ENCODE measurements at regions of chr11 and their contacts with region 1.

Region 1: DNA sequence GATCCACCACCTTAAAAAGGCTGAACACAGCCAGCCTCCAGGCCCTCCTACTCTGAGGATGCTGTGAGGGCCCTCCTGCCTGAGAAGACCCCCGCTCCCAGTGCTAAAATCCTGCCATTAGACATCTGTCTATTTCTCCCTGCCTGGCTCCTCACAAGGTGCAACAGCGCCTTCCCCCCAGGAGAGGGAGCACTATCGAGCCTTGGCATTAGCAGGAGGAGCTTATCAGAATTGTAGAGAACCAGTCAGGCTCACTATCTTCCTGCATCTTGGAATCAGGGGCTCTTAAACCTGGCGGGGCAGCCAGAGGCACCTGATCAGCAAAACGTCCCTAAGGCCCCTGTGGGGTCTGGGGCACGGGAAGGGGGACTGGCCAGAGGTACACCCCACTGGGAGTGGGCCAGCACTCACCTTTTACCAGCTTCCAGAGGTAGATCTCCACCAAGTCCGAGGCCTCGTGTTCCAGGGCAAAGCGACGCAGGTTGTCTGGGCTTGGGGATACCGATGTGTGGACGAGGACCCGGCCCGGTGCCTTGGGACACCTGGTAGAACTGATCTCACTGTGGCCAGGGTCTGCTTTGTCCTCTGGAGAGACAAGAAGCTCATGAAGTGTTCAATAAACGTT is 28.7 kb downstream of the CHRDL2 start:
- DNase-seq: peak; percentile 85 to 89
- H3K4me3 ChIP-seq: no peak overlapping the region
- H3K4me3 Mint-ChIP-seq: no peak overlapping the region
- H3K27ac Mint-ChIP-seq: no peak overlapping the region
- H3K4me1 ChIP-seq: no peaks in the 10 kb centered on the region
- H3K4me1 Mint-ChIP-seq: no peaks in the 10 kb centered on the region
- H3K27me3 ChIP-seq: no peaks in the 10 kb centered on the region
- H3K27me3 Mint-ChIP-seq: no peaks in the 10 kb centered on the region
- CTCF ChIP-seq: peak; percentile 99 to 100

Region 2: GRCh38 chr11:74611369-74611861 is 91.1 kb before region 1 on chr11:
- CTCF ChIA-PET with region 1: no interaction called
- POLR2A ChIA-PET with region 1: no interaction called
- intact Hi-C with region 1: no loop called
- DNase-seq: peak in 1 of 2 experiments; percentile 43
- H3K4me3 ChIP-seq: no peak overlapping the region
- H3K4me3 Mint-ChIP-seq: no peak overlapping the region
- H3K27ac Mint-ChIP-seq: no peak overlapping the region
- H3K4me1 ChIP-seq: no peaks in the 10 kb centered on the region; the same call in none of the 2 replicates
- H3K4me1 Mint-ChIP-seq: no peaks in the 10 kb centered on the region
- H3K27me3 ChIP-seq: no peaks in the 10 kb centered on the region
- H3K27me3 Mint-ChIP-seq: no peaks in the 10 kb centered on the region
- CTCF ChIP-seq: peak; percentile 67 to 70

Region 3: DNA sequence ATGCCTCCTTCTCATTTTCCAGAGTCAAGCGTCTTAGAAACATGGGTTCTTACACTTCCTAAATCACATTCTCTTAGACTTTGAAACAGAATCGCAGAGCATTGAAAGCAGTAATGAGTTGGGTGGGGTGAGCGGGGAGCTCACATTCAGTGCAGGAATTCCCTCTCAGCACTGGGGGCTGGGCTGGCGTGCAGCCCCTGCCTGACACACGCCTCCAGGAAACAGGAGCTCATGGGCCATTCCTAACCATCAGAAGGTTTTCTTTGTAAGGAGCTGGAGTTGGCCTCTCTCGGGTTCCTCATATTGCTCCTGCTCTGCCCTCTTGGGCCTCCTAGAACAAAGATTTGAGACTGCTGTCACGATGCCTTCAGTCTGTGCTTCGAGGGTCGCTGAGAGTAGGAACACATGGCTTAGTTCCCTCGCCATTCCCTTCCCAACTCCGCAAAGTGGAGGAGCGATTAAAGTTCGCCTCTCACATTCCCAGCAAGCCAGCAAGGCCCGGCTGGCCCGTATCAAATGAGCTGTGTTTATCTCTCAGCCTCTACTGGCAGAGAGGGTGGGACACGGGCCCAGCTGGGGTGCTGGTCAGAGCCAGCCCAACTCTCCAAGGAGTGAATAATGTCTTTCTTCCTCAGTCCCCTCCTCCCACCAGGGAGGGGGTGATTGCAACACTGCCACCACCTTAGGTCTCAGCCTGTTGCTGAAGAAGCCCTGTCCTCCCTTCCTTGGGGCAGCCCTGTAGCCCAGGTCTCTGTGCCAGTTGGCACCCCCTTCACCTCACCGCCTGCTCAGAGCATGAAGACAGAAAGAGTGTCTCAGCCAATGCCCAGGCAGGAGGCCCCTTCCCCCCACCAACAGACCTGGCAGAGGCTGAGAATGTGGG is 18.3 kb after region 1 on chr11:
- CTCF ChIA-PET with region 1: interaction called, 158 read pairs
- POLR2A ChIA-PET with region 1: no interaction called
- intact Hi-C with region 1: loop called (anchors 1 kb)
- DNase-seq: no peak
- H3K4me3 ChIP-seq: no peak overlapping the region
- H3K4me3 Mint-ChIP-seq: no peak overlapping the region
- H3K27ac Mint-ChIP-seq: no peak overlapping the region
- H3K4me1 ChIP-seq: 0 out of 2 replicates have a peak, but pooled peaks cover 7% of the 10 kb centered on the region
- H3K4me1 Mint-ChIP-seq: peaks cover 13% of the 10 kb centered on the region
- H3K27me3 ChIP-seq: no peaks in the 10 kb centered on the region
- H3K27me3 Mint-ChIP-seq: no peaks in the 10 kb centered on the region
- CTCF ChIP-seq: no peak

Region 4: GRCh38 chr11:74734559-74734925 is 32.0 kb after region 1 on chr11:
- CTCF ChIA-PET with region 1: interaction called, 158 read pairs
- POLR2A ChIA-PET with region 1: no interaction called
- intact Hi-C with region 1: loop called (anchors 1 kb)
- DNase-seq: no peak
- H3K4me3 ChIP-seq: no peak overlapping the region
- H3K4me3 Mint-ChIP-seq: no peak overlapping the region
- H3K27ac Mint-ChIP-seq: no peak overlapping the region
- H3K4me1 ChIP-seq: peaks cover 13% of the 10 kb centered on the region
- H3K4me1 Mint-ChIP-seq: peaks cover 21% of the 10 kb centered on the region
- H3K27me3 ChIP-seq: no peaks in the 10 kb centered on the region
- H3K27me3 Mint-ChIP-seq: peaks cover 16% of the 10 kb centered on the region
- CTCF ChIP-seq: no peak

Region 5: DNA sequence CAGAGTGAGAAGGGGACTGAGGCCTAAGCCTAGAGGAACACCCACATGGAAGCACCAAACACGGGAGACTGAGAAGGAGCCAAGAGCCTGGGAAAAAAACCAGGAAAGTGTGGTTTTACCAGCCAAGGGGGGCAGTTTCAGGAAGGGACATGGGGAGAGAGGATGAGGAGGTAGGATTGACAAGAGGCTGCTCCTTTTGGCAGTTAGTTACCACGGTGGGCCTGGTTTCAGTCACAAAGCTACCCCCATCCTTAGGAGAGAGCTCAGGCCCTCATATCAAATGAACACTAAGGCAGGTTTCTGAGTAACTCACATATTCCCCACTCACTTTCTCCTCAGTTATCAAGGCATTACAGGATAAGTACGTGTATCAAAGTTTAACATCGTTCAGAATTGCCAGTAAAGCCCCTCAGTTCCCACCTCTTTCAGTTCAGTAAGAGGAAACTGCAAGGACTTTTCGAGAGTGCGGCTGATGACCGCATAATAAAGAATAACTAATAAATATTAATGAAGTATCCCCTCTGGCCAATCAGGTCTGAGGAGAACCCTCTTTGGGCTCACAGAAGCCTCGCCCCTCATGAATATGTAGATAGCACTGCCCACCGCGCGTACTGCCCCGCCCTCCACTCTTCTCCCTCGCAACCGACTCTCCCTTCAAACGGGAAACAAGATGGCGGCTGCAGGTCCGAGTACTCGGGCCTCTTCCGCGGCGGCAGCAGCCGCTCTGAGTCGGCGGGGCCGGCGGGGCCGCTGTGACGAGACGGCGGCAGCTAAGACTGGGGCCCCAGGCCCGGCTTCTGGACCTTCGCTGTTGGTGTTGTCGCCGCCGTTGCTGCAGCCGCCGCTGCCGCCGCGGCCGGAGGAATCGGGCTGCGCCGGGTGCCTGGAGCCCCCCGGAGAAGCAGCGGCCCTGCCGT is 46.0 kb after region 1 on chr11 and contains the start of gene RNF169:
- CTCF ChIA-PET with region 1: interaction called, 11 read pairs
- POLR2A ChIA-PET with region 1: no interaction called
- intact Hi-C with region 1: no loop called
- DNase-seq: peak; percentile 97 to 98
- H3K4me3 ChIP-seq: peak within 1 kb of the TSS; percentile 88
- H3K4me3 Mint-ChIP-seq: peak within 1 kb of the TSS; percentile 88
- H3K27ac Mint-ChIP-seq: peak within 1 kb of the TSS; percentile 76
- H3K4me1 ChIP-seq: peaks cover 9% of the 10 kb centered on the region
- H3K4me1 Mint-ChIP-seq: peaks cover 18% of the 10 kb centered on the region
- H3K27me3 ChIP-seq: no peaks in the 10 kb centered on the region
- H3K27me3 Mint-ChIP-seq: no peaks in the 10 kb centered on the region
- CTCF ChIP-seq: no peak
- total RNA-seq, gene RNF169: 28.0 and 28.7 TPM in 2 replicates

Region 6: DNA sequence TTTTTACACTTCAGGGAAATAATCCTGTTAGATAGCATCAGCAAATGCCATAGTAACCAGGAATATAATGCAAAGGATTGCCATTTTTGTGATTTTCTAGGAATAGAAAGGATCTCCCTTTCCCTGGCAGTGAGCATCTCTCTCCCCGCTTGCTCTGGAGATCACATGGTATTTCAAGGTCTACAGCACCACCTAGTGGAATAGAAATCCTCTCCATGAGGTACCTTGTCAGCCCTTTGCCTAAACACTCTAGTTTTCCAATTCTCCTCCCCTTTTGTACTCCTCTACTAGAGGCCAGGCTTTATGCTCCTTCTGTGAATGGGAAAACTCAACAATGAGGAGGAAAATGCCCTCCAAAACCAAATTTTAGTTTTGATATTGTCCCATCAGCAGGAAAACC is 168.0 kb after region 1 on chr11:
- CTCF ChIA-PET with region 1: interaction called, 28 read pairs
- POLR2A ChIA-PET with region 1: no interaction called
- intact Hi-C with region 1: loop called (anchors 1 kb)
- DNase-seq: peak in 1 of 2 experiments; percentile 80
- H3K4me3 ChIP-seq: no peak overlapping the region
- H3K4me3 Mint-ChIP-seq: no peak overlapping the region
- H3K27ac Mint-ChIP-seq: no peak overlapping the region
- H3K4me1 ChIP-seq: no peaks in the 10 kb centered on the region
- H3K4me1 Mint-ChIP-seq: no peaks in the 10 kb centered on the region
- H3K27me3 ChIP-seq: no peaks in the 10 kb centered on the region
- H3K27me3 Mint-ChIP-seq: no peaks in the 10 kb centered on the region
- CTCF ChIP-seq: peak; percentile 61 to 96

Measured in Caco-2 (cell line).